ENCODE measurements at regions of chr15 and their contacts with region 1.

Region 1: GRCh38 chr15:74781431-74782258 is at the start of gene CSK:
- DNase-seq: peak; percentile 74 to 87 (median 84)
- H3K4me3 ChIP-seq: peak within 1 kb of the TSS; percentile 93 to 97
- H3K4me3 Mint-ChIP-seq: peak within 1 kb of the TSS; percentile 90 to 97 (median 96)
- H3K27ac ChIP-seq: peak within 1 kb of the TSS; percentile 86
- H3K27ac Mint-ChIP-seq: peak within 1 kb of the TSS; percentile 95 to 98 (median 98)
- H3K4me1 ChIP-seq: peaks cover 80% of the 10 kb centered on the region
- H3K4me1 Mint-ChIP-seq: peaks cover 48 to 90% (median 62%) of the 10 kb centered on the region in 4 donors
- H3K27me3 ChIP-seq: no peaks in the 10 kb centered on the region
- H3K27me3 Mint-ChIP-seq: no peaks in the 10 kb centered on the region
- total RNA-seq, gene CSK: 234 to 247 TPM

Region 2: GRCh38 chr15:74793135-74794028 is 11.7 kb after region 1 on chr15:
- CTCF ChIA-PET with region 1: interaction called, 1,908 read pairs
- POLR2A ChIA-PET with region 1: interaction called, 1,342 read pairs
- intact Hi-C with region 1: loop called (anchors 1 kb)
- DNase-seq: peak; percentile 70 to 83 (median 75)
- H3K4me3 ChIP-seq: peak overlapping the region; percentile 17 to 24
- H3K4me3 Mint-ChIP-seq: peak overlapping the region; percentile 6 to 96 (median 75)
- H3K27ac ChIP-seq: peak overlapping the region; percentile 56
- H3K27ac Mint-ChIP-seq: peak overlapping the region; percentile 80 to 95 (median 90)
- H3K4me1 ChIP-seq: peaks cover 99% of the 10 kb centered on the region
- H3K4me1 Mint-ChIP-seq: peaks cover 61 to 94% (median 77%) of the 10 kb centered on the region in 4 donors
- H3K27me3 ChIP-seq: no peaks in the 10 kb centered on the region
- H3K27me3 Mint-ChIP-seq: no peaks in the 10 kb centered on the region

Region 3: DNA sequence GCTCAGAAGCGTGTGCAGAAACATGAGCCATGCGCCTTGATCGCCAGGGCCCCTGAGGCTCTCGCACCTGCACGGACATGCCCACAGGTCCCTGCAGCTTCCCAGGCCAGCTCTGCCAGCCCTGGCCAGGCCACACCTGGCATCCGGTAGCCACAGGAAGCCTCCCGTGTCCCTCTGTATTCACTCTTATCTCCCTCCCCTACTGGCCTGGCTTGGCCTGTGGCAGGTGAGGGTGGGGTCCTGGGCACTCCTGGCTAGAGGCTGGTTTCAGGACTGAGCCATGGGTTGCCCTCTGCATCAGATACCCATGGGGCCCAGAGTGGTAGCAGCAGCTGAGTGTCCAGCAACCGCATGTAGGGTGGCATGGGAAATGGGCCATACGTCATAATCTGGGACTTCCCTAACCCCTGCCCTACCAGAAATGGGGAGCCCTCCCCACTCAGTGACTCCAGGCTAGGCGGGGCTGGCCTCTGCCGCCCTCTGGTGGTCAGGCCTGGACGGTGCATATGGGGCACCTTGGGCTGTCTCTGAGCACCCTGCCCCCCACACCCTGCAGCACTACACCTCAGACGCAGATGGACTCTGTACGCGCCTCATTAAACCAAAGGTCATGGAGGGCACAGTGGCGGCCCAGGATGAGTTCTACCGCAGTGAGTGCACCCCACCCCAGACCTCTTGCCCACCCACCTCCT is 18.4 kb after region 1 on chr15:
- CTCF ChIA-PET with region 1: interaction called, 1,908 read pairs
- POLR2A ChIA-PET with region 1: interaction called, 1,342 read pairs
- intact Hi-C with region 1: loop called (anchors 1 kb)
- DNase-seq: peak; percentile 84 to 89 (median 86)
- H3K4me3 ChIP-seq: no peak overlapping the region
- H3K4me3 Mint-ChIP-seq: peak overlapping the region in 4 of 8 donors; percentile 17 to 65 (median 46)
- H3K27ac ChIP-seq: peak overlapping the region; percentile 84
- H3K27ac Mint-ChIP-seq: peak overlapping the region; percentile 83 to 97 (median 94)
- H3K4me1 ChIP-seq: peaks cover 55% of the 10 kb centered on the region
- H3K4me1 Mint-ChIP-seq: peaks cover 28 to 59% (median 45%) of the 10 kb centered on the region in 4 donors
- H3K27me3 ChIP-seq: no peaks in the 10 kb centered on the region
- H3K27me3 Mint-ChIP-seq: no peaks in the 10 kb centered on the region

Region 4: DNA sequence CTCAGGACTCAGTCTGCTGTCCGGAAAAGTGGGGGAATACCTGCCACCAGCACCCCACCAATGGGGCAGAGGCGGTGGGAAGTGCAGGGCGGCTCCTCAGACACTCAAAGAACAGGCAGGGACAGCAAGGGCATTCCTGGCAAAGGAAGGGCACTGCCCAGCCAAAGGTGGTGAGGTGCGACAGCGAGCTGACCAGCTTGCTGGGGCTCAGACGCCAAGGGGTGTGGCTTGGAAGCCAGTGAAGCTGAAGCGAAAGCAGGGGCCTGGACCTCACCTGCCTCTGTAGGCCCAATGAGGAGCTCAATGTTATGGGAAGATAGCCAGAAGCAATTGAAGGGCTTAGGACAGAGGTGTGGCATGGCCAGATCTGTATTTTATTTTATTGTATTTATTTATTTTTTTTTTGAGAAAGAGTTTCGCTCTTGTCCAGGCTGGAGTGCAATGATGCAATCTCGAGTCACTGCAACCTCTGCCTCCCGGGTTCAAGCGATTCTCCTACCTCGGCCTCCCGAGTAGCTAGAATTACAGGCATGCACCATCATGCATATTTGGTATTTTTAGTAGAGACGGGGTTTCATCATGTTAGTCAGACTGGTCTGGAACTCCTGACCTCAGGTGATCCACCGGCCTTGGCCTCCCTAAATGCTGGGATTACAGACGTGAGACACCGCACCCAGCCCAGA is 26.6 kb after region 1 on chr15:
- CTCF ChIA-PET with region 1: interaction called, 1,908 read pairs
- POLR2A ChIA-PET with region 1: interaction called, 59 read pairs
- intact Hi-C with region 1: no loop called
- DNase-seq: no peak
- H3K4me3 ChIP-seq: no peak overlapping the region
- H3K4me3 Mint-ChIP-seq: no peak overlapping the region
- H3K27ac ChIP-seq: peak overlapping the region; percentile 18
- H3K27ac Mint-ChIP-seq: peak overlapping the region; percentile 64 to 96 (median 81)
- H3K4me1 ChIP-seq: peaks cover 15% of the 10 kb centered on the region
- H3K4me1 Mint-ChIP-seq: peaks cover 22 to 40% (median 30%) of the 10 kb centered on the region in 4 donors
- H3K27me3 ChIP-seq: no peaks in the 10 kb centered on the region
- H3K27me3 Mint-ChIP-seq: no peaks in the 10 kb centered on the region

Region 5: GRCh38 chr15:74842581-74843444 is 61.2 kb after region 1 on chr15 and contains the start of gene ULK3:
- CTCF ChIA-PET with region 1: interaction called, 11 read pairs
- POLR2A ChIA-PET with region 1: interaction called, 27 read pairs
- intact Hi-C with region 1: loop called (anchors 2 kb)
- DNase-seq: peak; percentile 92 to 94 (median 93)
- H3K4me3 ChIP-seq: peak within 1 kb of the TSS; percentile 81 to 83
- H3K4me3 Mint-ChIP-seq: peak within 1 kb of the TSS; percentile 87 to 92 (median 91)
- H3K27ac ChIP-seq: peak within 1 kb of the TSS; percentile 77
- H3K27ac Mint-ChIP-seq: peak within 1 kb of the TSS; percentile 91 to 97 (median 93)
- H3K4me1 ChIP-seq: peaks cover 52% of the 10 kb centered on the region
- H3K4me1 Mint-ChIP-seq: peaks cover 37 to 57% (median 46%) of the 10 kb centered on the region in 4 donors
- H3K27me3 ChIP-seq: no peaks in the 10 kb centered on the region
- H3K27me3 Mint-ChIP-seq: no peaks in the 10 kb centered on the region
- total RNA-seq, gene ULK3: 84.9 to 88.3 TPM

Region 6: DNA sequence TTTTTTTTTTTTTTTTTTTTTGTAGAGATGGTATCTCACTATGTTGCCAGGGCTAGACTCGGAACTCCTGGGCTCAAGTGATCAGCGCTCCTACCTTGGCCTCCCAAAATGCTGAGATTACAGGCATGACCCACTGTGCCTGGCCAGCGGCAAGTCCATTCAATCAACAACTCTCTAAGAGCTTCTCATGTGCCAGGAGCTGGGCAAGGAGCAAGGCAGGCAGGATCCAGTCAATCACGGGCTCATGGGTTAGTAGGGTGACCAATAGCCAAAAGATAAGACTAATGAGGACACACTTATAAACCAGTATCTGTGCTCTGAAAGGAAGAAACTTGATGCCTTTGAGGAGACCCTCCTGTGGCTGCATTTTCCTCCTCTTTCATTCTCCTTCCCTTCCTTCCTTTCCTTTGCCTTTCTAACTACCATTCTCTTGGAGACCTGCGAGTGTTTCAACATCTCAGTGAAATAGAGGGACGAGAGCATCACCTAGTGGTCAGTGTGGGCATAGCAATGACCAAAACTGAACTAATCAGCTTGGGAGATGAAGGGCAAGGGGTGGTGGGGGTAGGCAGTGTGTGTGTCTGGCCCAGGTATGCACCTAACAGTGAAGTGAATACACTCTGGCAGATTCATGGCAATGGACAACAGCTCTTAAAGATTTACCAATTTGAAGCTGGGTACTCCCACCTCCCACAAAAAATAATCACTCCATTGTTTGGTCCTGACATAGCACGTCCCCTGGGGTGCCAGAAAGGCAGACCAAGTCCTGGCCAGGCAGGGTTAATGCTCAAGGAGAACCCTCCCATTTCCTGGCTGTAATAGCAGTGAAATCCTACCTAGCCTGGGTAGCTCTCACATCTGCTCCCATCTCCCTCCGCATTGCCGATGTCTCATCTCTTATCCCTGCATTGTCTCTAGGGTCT is 168.7 kb after region 1 on chr15:
- CTCF ChIA-PET with region 1: interaction called, 12 read pairs
- POLR2A ChIA-PET with region 1: no interaction called
- intact Hi-C with region 1: no loop called
- DNase-seq: peak; percentile 70 to 79 (median 75)
- H3K4me3 ChIP-seq: no peak overlapping the region
- H3K4me3 Mint-ChIP-seq: no peak overlapping the region
- H3K27ac ChIP-seq: no peak overlapping the region
- H3K27ac Mint-ChIP-seq: peak overlapping the region in 1 of 7 donors; percentile 1
- H3K4me1 ChIP-seq: peaks cover 6% of the 10 kb centered on the region
- H3K4me1 Mint-ChIP-seq: peaks cover under 1 to 11% (median 3%) of the 10 kb centered on the region in 4 donors
- H3K27me3 ChIP-seq: no peaks in the 10 kb centered on the region
- H3K27me3 Mint-ChIP-seq: peaks cover 2% of the 10 kb centered on the region in 2 donors